Cardiac septum (tissue), 1 donor: ENCODE measurements at regions of chr3 and their contacts with region 1.

Region 1: DNA sequence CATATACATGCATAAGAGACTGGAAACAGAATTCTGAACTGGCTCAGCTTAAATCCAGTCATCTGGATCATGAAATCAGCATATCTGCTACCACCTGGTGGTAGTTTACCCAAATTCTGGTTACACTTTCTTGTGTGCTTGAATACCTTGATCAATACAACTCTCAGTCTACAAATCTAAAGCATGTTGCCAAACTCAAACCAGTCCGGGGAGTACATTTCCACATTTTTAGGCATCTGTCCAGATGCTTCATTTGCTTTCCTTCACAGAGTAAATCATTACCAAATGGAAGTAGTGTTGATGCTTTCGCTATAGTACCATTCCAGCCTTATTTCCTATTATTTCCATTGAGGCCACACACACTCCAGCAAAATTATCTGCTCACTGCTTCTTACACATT is 126.4 kb downstream of the P2RY1 start:
- DNase-seq: no peak

Region 2: DNA sequence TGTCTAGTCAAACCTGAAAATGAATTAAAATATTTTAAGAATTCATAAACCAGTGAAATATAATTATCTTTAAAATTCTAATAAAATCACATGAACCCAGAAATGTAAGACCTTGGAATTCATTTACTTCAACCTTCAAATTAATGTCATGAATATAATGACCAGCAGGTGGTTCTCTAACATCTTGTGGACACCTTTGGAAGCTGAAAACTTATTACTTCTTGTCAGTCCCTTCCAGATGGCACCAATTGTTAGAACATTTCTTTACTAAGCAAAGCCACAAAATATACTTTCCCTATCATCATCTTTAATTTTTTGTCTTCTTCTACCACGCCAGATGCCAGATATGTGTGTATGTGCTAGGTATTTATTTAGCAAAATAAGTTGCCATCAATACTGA is 452.6 kb before region 1 on chr3:
- intact Hi-C with region 1: loop called (anchors 10 kb)
- DNase-seq: no peak

Region 3: GRCh38 chr3:154728285-154728684 is 1767.0 kb after region 1 on chr3:
- intact Hi-C with region 1: no loop called
- DNase-seq: no peak